SK-N-SH (cell line): ENCODE measurements at regions of chr3 and their contacts with region 1.

Region 1: GRCh38 chr3:66253790-66254620 is 33.2 kb downstream of the SLC25A26 start:
- DNase-seq: no peak
- H3K4me3 ChIP-seq: no peak overlapping the region; a peak in 1 of 4 replicates
- H3K27ac ChIP-seq: no peak overlapping the region
- H3K4me1 ChIP-seq: peaks cover 0 to 13% of the 10 kb centered on the region in 2 experiments; a peak in 1 of 4 replicates
- H3K27me3 ChIP-seq: no peaks in the 10 kb centered on the region
- CTCF ChIP-seq: peak; percentile 80
- EP300 ChIP-seq: no peak
- RAD21 ChIP-seq: peak; percentile 71

Region 2: GRCh38 chr3:66236281-66236680 is 17.7 kb before region 1 on chr3:
- CTCF ChIA-PET with region 1: interaction called, 11 read pairs
- POLR2A ChIA-PET with region 1: no interaction called
- DNase-seq: no peak
- H3K4me3 ChIP-seq: no peak overlapping the region
- H3K27ac ChIP-seq: no peak overlapping the region
- H3K4me1 ChIP-seq: peaks cover 0 to 9% of the 10 kb centered on the region in 2 experiments; a peak in 2 of 4 replicates
- H3K27me3 ChIP-seq: no peaks in the 10 kb centered on the region
- CTCF ChIP-seq: peak; percentile 35; the same call in 1 of the 2 replicates
- EP300 ChIP-seq: no peak
- RAD21 ChIP-seq: no peak

Region 3: GRCh38 chr3:66270701-66271100 is 16.7 kb after region 1 on chr3:
- CTCF ChIA-PET with region 1: interaction called, 26 read pairs
- POLR2A ChIA-PET with region 1: no interaction called
- DNase-seq: no peak
- H3K4me3 ChIP-seq: no peak overlapping the region
- H3K27ac ChIP-seq: peak overlapping the region in 1 of 2 experiments; percentile 27; a peak in 1 of 4 replicates
- H3K4me1 ChIP-seq: no peaks in the 10 kb centered on the region
- H3K27me3 ChIP-seq: no peaks in the 10 kb centered on the region
- CTCF ChIP-seq: no peak
- EP300 ChIP-seq: no peak
- RAD21 ChIP-seq: no peak

Region 4: GRCh38 chr3:66407611-66408218 is 153.7 kb after region 1 on chr3:
- CTCF ChIA-PET with region 1: interaction called, 14 read pairs
- POLR2A ChIA-PET with region 1: no interaction called
- DNase-seq: peak; percentile 91
- H3K4me3 ChIP-seq: no peak overlapping the region; a peak in 1 of 4 replicates
- H3K27ac ChIP-seq: no peak overlapping the region
- H3K4me1 ChIP-seq: peaks cover 0 to 5% of the 10 kb centered on the region in 2 experiments; a peak in 2 of 4 replicates
- H3K27me3 ChIP-seq: no peaks in the 10 kb centered on the region
- CTCF ChIP-seq: peak; percentile 89
- EP300 ChIP-seq: no peak
- RAD21 ChIP-seq: peak; percentile 81

Region 5: DNA sequence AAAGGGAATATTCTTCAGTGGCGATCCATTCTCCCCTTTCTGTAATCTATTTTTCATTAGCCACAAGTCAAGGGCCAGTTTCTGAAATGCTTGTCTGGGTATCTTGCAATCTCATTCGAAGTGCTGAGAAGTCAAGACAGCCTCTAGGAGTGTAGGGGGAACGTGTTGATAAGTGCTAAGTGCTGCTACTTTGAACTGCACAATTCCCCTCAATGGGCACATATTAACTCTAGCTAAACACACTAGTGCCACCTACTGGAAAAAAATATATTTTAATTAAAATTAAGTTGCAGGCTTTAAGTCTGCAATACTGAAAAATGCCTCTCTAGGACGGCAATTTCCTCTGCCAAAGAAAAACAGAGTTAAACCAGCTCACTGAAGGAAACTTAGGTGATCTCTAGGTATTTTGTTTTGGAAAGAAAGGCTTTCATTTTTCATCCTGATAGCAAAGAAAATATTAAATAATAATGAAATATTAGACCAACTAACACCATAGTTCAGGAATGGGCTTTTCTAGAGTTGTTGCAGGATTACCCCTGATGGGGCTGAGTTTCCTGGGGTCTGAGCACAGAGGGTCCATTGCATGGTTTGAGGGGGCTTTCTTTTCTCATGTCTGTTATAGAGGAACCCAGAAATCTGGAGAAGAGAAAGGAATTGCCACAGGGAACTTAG is 562.2 kb after region 1 on chr3:
- CTCF ChIA-PET with region 1: interaction called, 67 read pairs
- POLR2A ChIA-PET with region 1: no interaction called
- DNase-seq: peak; percentile 46
- H3K4me3 ChIP-seq: no peak overlapping the region
- H3K27ac ChIP-seq: no peak overlapping the region
- H3K4me1 ChIP-seq: no peaks in the 10 kb centered on the region
- H3K27me3 ChIP-seq: no peaks in the 10 kb centered on the region; the same call in 1 of the 2 replicates
- CTCF ChIP-seq: peak; percentile 66
- EP300 ChIP-seq: no peak
- RAD21 ChIP-seq: peak; percentile 80